GM12878 (cell line): ENCODE measurements at regions of chr1 and their contacts with region 1.

Region 1: GRCh38 chr1:67847466-67847865 is 14.2 kb upstream of the GNG12 start:
- DNase-seq: no peak
- ATAC-seq: no peak
- H3K4me3 ChIP-seq: no peak overlapping the region
- H3K27ac ChIP-seq: no peak overlapping the region
- H3K4me1 ChIP-seq: no peaks in the 10 kb centered on the region
- H3K27me3 ChIP-seq: no peaks in the 10 kb centered on the region
- CTCF ChIP-seq: no peak
- EP300 ChIP-seq: no peak
- POLR2A ChIP-seq: no peak
- RAD21 ChIP-seq: no peak

Region 2: DNA sequence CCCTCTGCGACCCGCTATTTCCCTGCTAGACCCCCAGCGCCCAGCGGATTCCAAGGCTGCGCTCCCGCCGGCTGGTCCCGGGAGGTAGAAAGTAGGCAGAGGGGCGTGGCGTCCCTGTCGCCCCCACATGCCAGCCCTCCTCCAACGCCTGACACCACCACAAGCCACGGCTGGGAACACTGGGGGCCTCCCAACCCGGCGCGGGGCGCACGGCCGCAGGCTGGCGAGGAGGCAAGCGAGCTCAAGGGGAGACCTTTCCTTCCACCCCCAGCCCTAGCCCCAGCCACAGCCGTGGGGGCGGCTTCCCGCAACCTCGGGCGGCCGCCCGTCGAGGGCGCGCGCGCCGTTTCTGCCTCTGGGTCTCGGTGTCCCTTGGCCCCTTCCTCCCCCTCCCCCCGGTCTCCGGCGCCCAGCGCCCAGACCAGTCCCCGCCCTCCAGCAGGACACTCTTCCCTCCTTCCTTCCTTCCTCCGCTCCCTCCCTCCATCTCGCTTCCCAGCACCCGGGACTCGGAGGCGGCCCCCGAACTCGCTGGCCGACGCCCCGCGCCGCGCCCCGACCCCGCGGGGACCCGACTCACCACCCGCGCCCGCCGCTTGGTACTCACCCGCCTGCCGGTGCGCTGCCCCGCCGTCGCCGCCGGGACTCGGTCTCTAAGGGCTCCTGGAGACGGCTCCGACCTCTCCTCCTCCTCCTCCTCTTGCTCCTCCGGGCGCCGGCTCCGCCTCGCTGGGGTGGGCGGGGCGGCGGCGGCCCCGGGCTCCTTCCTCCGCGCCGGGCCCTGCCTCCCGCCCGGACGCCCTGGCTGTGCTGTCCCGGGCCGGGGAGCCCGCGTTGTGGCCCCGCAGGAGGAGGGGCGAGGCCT is 14.5 kb before region 1 on chr1 and contains the start of gene GNG12:
- CTCF ChIA-PET with region 1: interaction called, 87 read pairs
- POLR2A ChIA-PET with region 1: interaction called, 7 read pairs
- RAD21 ChIA-PET with region 1: interaction called, 19 read pairs
- SMC1A ChIA-PET with region 1: interaction called, 45 read pairs
- in situ Hi-C with region 1: no loop called
- intact Hi-C with region 1: no loop called
- DNase-seq: no peak
- ATAC-seq: peak; percentile 78
- H3K4me3 ChIP-seq: no peak within 1 kb of the TSS
- H3K27ac ChIP-seq: no peak within 1 kb of the TSS
- H3K4me1 ChIP-seq: no peaks in the 10 kb centered on the region
- H3K27me3 ChIP-seq: peaks cover 6 to 11% of the 10 kb centered on the region in 2 experiments; a peak in 3 of 4 replicates
- CTCF ChIP-seq: no peak
- EP300 ChIP-seq: no peak
- POLR2A ChIP-seq: no peak
- RAD21 ChIP-seq: no peak
- polyA plus RNA-seq, gene GNG12: 0.22 to 0.27 TPM